Aorta (tissue), 5 donors: ENCODE measurements at regions of chr10 and their contacts with region 1.

Region 1: DNA sequence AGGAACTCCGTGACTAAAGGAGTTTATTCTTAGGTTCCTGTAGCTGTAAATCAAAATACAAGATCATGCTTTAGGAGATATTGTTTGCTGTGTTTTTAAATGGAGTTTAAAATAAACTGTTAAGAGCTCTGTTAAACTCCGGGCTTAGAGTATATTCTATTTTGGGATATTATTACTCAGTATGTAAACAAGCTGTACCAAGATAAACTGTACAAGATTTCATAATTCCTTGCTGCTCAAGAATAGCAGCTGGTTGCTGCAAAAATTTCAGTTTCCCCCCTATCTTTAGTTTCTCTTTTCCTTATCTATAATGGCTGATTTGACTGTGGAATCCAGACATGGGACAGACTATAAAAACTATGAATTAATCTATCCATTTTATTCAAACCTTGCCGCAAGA is 215.7 kb downstream of the HTR7 start:
- DNase-seq: no peak
- ATAC-seq: peak; percentile 83
- H3K4me3 ChIP-seq: peak overlapping the region in 1 of 2 donors; percentile 31
- H3K27ac ChIP-seq: peak overlapping the region in 1 of 2 donors; percentile 76
- H3K4me1 ChIP-seq: peaks cover 8 to 10% of the 10 kb centered on the region in 2 donors
- H3K27me3 ChIP-seq: no peaks in the 10 kb centered on the region

Region 2: GRCh38 chr10:90462749-90463470 is 179.2 kb before region 1 on chr10:
- intact Hi-C with region 1: loop called in 1 of 2 experiments (anchors 10 kb)
- DNase-seq: no peak
- ATAC-seq: no peak
- H3K4me3 ChIP-seq: no peak overlapping the region
- H3K27ac ChIP-seq: peak overlapping the region in 1 of 2 donors; percentile 67
- H3K4me1 ChIP-seq: peaks cover 2 to 8% of the 10 kb centered on the region in 2 donors
- H3K27me3 ChIP-seq: no peaks in the 10 kb centered on the region

Region 3: GRCh38 chr10:90560331-90560730 is 81.8 kb before region 1 on chr10:
- intact Hi-C with region 1: no loop called
- DNase-seq: no peak
- ATAC-seq: no peak
- H3K4me3 ChIP-seq: no peak overlapping the region
- H3K27ac ChIP-seq: no peak overlapping the region
- H3K4me1 ChIP-seq: no peaks in the 10 kb centered on the region
- H3K27me3 ChIP-seq: no peaks in the 10 kb centered on the region